Psoas muscle (tissue), 8 donors: ENCODE measurements at regions of chr19 and their contacts with region 1.

Region 1: GRCh38 chr19:5612891-5613865 is 9.4 kb downstream of the SAFB2 start:
- DNase-seq: peak in 1 of 2 donors; percentile 4
- ATAC-seq: no peak
- H3K4me3 ChIP-seq: no peak overlapping the region
- H3K27ac ChIP-seq: no peak overlapping the region
- H3K4me1 ChIP-seq: peaks cover 5% of the 10 kb centered on the region
- H3K27me3 ChIP-seq: no peaks in the 10 kb centered on the region
- CTCF ChIP-seq: no peak

Region 2: DNA sequence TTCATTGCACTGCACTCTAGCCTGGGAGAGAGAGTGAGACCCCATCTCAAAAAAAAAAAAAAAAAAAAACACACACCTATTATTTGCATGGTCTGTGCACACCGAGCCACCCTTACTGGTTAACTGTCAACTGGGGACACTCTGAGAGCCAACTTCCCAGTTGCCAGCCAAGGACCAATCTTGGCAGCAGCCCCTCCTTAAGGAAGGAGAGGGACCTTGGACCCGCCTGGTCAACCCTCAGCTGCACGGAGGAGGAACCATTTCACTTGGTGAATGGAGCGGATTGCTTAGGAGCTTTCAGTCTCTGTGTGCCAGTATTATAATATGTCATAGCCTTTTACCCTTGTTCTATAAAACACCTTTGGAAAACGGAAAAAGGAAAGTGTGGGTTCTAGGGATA is 42.2 kb after region 1 on chr19:
- intact Hi-C with region 1: loop called in 1 of 2 experiments (anchors 5 kb)
- DNase-seq: no peak
- ATAC-seq: peak in 1 of 4 donors; percentile 34
- H3K4me3 ChIP-seq: no peak overlapping the region
- H3K27ac ChIP-seq: no peak overlapping the region
- H3K4me1 ChIP-seq: no peaks in the 10 kb centered on the region
- H3K27me3 ChIP-seq: no peaks in the 10 kb centered on the region
- CTCF ChIP-seq: no peak